Mammary epithelial cell (primary cell): ENCODE measurements at regions of chr12 and their contacts with region 1.

Region 1: GRCh38 chr12:113462117-113462774 is 9.4 kb downstream of the LHX5 start:
- DNase-seq: peak; percentile 57
- H3K4me3 ChIP-seq: peak overlapping the region in 2 of 3 experiments; percentile 27 to 31
- H3K27ac ChIP-seq: no peak overlapping the region
- H3K4me1 ChIP-seq: peaks cover 11% of the 10 kb centered on the region
- H3K27me3 ChIP-seq: peaks cover 49% of the 10 kb centered on the region
- CTCF ChIP-seq: peak; percentile 71 to 92

Region 2: GRCh38 chr12:113325916-113326315 is 136.3 kb before region 1 on chr12:
- CTCF ChIA-PET with region 1: no interaction called
- dilution Hi-C with region 1: no loop called
- in situ Hi-C with region 1: no loop called
- intact Hi-C with region 1: no loop called
- DNase-seq: no peak
- H3K4me3 ChIP-seq: no peak overlapping the region
- H3K27ac ChIP-seq: no peak overlapping the region
- H3K4me1 ChIP-seq: no peaks in the 10 kb centered on the region
- H3K27me3 ChIP-seq: no peaks in the 10 kb centered on the region
- CTCF ChIP-seq: no peak

Region 3: DNA sequence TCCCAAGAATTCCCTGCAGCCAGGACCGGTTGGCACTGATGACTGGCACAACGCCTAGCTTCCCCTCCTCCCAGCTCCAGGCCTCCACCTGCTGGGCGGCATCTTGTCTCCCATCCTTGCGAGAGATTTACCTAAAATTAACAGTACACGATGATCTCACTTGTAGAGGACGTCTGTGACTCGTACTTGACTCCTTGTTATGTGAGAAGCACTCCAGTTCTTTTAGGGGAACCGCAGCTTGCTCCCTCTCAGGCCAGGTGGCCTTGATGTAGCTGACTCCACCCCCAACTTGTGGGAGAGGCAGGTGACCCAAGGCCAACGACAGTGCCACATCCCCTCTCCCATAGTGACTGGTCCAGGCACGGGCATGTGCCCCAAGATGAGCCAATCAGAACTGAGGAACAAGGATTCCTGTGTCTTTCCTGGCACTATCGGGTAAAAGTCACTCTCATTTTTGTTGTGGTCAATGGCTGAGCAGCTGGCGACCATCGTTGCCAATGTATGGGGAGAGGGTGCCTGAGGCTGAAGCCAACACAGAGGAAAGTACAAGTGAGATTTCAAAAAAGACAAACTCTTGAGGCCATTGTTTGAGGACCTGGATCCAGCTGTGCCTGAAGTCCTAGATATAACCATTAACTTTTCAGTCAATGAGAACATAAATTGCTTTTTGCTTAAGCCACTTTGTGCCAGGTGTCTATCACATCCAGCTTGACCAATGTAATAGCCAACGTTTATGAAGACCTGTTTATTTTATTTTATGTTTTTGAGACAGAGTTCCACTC is 295.2 kb after region 1 on chr12:
- CTCF ChIA-PET with region 1: no interaction called
- dilution Hi-C with region 1: no loop called
- in situ Hi-C with region 1: no loop called
- intact Hi-C with region 1: loop called (anchors 2 kb)
- DNase-seq: peak; percentile 5
- H3K4me3 ChIP-seq: no peak overlapping the region
- H3K27ac ChIP-seq: no peak overlapping the region
- H3K4me1 ChIP-seq: no peaks in the 10 kb centered on the region
- H3K27me3 ChIP-seq: no peaks in the 10 kb centered on the region
- CTCF ChIP-seq: peak in 1 of 2 donors; percentile 22